Calu3 (cell line): ENCODE measurements at regions of chr9 and their contacts with region 1.

Region 1: GRCh38 chr9:3441197-3441816 is 84.5 kb downstream of the RFX3 start:
- DNase-seq: peak; percentile 27
- H3K4me3 Mint-ChIP-seq: no peak overlapping the region
- H3K27ac Mint-ChIP-seq: no peak overlapping the region
- H3K4me1 Mint-ChIP-seq: peaks cover 8% of the 10 kb centered on the region
- H3K27me3 Mint-ChIP-seq: no peaks in the 10 kb centered on the region
- CTCF ChIP-seq: peak; percentile 49

Region 2: GRCh38 chr9:2857564-2858198 is 583.6 kb before region 1 on chr9:
- CTCF ChIA-PET with region 1: interaction called, 4 read pairs
- intact Hi-C with region 1: loop called (anchors 5 kb)
- DNase-seq: peak; percentile 62
- H3K4me3 Mint-ChIP-seq: no peak overlapping the region
- H3K27ac Mint-ChIP-seq: no peak overlapping the region
- H3K4me1 Mint-ChIP-seq: no peaks in the 10 kb centered on the region
- H3K27me3 Mint-ChIP-seq: peaks cover 62% of the 10 kb centered on the region
- CTCF ChIP-seq: peak; percentile 28

Region 3: DNA sequence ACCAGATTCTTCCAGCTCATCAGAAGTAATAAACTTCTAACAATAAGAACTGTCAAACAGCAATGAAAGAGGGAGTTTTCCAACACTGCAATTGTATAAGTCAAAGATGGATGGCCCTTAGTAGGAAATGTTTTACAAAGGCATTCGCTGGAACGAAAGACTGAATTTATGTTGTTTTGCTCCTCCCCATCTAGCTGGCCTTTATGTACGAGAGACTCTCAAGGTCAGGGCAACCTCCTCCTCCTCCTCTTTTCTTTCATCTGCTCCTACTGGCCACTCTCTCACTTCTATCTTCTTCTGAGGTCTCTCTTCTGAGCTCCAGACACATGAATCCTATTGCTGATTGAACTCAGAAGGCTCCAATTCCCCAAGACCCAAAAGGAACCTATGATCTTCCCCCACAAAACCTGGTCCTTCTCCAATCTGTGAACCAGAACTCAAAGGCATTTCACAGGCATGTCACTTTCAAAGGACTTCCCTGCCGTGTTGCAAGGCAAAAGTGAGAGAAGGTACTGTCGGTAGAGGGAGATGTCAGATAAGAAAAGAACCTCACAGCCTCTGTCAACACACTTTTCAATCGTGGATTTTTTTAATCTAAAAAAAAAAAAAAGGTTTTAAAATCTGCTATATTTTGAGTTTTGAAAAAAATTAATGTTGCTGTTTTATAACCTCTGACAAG is 568.9 kb before region 1 on chr9:
- CTCF ChIA-PET with region 1: no interaction called
- intact Hi-C with region 1: loop called (anchors 5 kb)
- DNase-seq: peak; percentile 2
- H3K4me3 Mint-ChIP-seq: no peak overlapping the region
- H3K27ac Mint-ChIP-seq: no peak overlapping the region
- H3K4me1 Mint-ChIP-seq: no peaks in the 10 kb centered on the region
- H3K27me3 Mint-ChIP-seq: peaks cover 92% of the 10 kb centered on the region
- CTCF ChIP-seq: no peak

Region 4: DNA sequence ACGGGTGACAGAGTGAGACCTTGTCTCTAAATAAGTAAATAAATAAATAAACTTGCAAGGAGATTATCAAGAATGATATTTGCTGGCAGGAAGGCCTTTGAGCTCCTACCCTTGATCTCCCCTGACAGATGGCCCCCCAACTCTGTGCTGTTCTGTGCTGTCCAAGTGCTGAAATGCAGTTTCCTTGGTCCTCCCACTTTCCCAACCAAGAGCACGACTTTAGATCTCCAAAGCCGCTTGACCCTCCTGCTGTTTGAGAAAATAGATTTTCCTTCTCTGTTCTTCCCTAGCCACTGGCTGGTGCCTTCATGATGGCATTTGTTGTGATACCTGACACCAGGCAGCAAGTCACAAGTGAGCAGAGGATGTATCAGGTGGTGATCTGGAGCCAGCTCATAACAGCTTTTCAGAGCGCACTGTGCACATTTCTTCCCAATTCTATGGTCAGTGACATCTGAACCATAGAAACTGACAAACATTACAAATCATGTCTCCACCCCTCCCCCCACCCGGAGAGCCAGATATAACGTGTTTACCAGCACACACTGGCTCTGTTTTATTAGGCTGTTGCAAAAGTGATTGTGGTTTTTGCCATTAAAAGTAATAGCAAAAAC is 517.4 kb before region 1 on chr9:
- CTCF ChIA-PET with region 1: no interaction called
- intact Hi-C with region 1: no loop called
- DNase-seq: no peak
- H3K4me3 Mint-ChIP-seq: no peak overlapping the region
- H3K27ac Mint-ChIP-seq: no peak overlapping the region
- H3K4me1 Mint-ChIP-seq: no peaks in the 10 kb centered on the region
- H3K27me3 Mint-ChIP-seq: peaks cover 16% of the 10 kb centered on the region
- CTCF ChIP-seq: no peak

Region 5: DNA sequence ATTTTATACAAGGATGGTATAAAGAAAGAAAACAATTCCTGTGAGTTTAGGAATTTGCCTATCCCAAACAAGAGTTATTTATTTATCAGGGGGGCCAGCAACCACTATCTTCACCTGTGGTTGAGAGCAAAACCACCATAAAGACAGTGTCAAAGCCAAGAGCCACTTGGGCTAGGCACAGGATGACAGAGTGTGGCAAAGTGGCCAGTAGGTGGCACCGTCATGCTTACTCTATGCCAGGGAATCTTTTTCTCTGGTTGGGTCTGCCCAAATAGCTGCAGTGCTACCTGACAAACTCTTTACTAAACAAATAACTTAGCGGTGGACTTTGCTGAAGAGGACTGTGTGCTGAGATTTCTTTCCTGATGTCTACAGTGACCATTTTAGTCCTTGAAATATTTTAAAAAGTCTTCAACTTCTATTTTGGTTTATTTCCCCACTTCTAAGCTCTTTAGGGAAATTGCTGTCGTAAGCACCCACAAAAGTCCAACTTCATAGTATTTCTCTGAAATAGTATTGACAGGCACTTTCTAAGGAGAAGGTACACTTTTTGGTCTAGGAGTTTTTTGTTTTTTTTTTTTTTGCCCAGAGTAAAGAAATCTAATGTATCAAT is 200.5 kb before region 1 on chr9:
- CTCF ChIA-PET with region 1: interaction called, 38 read pairs
- intact Hi-C with region 1: loop called (anchors 2 kb)
- DNase-seq: peak; percentile 62
- H3K4me3 Mint-ChIP-seq: no peak overlapping the region
- H3K27ac Mint-ChIP-seq: no peak overlapping the region
- H3K4me1 Mint-ChIP-seq: no peaks in the 10 kb centered on the region
- H3K27me3 Mint-ChIP-seq: no peaks in the 10 kb centered on the region
- CTCF ChIP-seq: peak; percentile 37

Region 6: DNA sequence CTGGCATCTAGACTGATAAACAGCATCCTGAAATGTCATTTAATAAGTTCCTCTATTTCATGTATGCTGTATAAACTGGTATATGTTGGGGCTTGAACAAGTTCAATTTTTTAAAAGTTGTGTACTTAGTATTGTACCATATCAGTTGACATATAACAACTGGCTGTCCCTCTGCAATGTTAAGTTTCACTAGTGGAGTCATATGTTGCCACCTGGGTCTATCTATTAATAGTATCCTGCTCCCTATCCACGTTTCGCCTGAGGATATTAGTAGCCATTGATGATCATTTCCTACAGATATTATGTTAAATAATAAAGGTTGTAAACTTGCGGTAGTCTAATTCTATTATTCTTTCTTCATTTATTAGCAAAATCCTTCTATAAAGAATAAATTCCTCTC is 93.1 kb before region 1 on chr9:
- CTCF ChIA-PET with region 1: no interaction called
- intact Hi-C with region 1: no loop called
- DNase-seq: no peak
- H3K4me3 Mint-ChIP-seq: no peak overlapping the region
- H3K27ac Mint-ChIP-seq: no peak overlapping the region
- H3K4me1 Mint-ChIP-seq: no peaks in the 10 kb centered on the region
- H3K27me3 Mint-ChIP-seq: no peaks in the 10 kb centered on the region
- CTCF ChIP-seq: no peak

Region 7: DNA sequence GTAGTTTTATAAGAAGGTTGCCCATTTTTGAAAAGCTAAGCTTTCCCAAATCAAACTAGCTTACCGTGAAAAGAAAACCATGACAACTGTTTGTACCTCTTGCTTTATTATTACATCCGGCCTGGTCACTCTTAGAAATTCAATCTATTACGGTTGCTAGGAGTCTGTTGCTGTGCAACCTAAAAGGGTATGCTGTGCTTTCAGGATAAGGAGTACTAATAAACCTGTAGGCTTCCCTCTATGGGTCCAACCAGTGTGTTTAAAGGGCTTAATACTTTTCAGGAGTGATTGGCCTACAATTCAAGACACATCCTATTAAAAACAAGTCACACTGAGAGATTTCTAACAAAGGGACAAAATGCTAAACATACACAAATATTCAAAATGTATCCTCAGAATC is 57.4 kb after region 1 on chr9:
- CTCF ChIA-PET with region 1: no interaction called
- intact Hi-C with region 1: no loop called
- DNase-seq: no peak
- H3K4me3 Mint-ChIP-seq: no peak overlapping the region
- H3K27ac Mint-ChIP-seq: no peak overlapping the region
- H3K4me1 Mint-ChIP-seq: no peaks in the 10 kb centered on the region
- H3K27me3 Mint-ChIP-seq: no peaks in the 10 kb centered on the region
- CTCF ChIP-seq: no peak